ENCODE measurements at regions of chr6 and their contacts with region 1.

Region 1: DNA sequence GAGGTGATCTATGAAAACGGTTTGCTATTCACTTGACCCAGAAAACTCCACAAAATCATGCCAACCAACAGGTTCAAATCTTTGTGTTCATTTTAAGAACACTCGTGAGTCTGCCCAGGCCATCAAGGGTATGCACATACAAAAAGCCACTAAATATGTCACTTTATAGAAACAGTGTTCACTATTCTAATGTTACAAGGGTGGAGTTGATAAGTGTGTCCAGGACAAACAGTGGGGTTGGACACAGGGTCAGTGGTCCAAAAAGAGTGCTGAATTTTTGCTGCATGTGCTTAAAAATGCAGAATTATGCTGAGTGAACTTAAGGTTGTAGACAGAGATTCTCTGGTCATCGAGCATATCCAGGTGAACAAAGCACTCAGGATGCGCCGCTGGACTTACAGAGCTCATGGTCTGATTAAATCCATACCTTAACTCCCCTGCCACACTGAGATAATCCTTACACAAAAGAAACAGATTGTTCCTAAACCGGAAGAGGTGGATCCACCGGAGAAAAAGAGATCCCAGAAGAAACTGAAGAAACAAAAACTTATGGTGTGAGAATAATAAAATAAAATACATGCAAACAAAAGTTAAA is 23.5 kb downstream of the KIAA0408 start:
- DNase-seq: no peak

Region 2: GRCh38 chr6:127366281-127367022 is 69.3 kb before region 1 on chr6:
- intact Hi-C with region 1: loop called (anchors 2 kb)
- DNase-seq: no peak